Prostate gland (tissue), 2 donors: ENCODE measurements at regions of chr9 and their contacts with region 1.

Region 1: GRCh38 chr9:14428781-14429230 is 114.9 kb upstream of the NFIB start:
- DNase-seq: peak; percentile 73
- H3K4me3 ChIP-seq: no peak overlapping the region
- H3K27ac ChIP-seq: no peak overlapping the region
- H3K4me1 ChIP-seq: no peaks in the 10 kb centered on the region
- H3K27me3 ChIP-seq: no peaks in the 10 kb centered on the region
- CTCF ChIP-seq: peak; percentile 61 to 77 (median 64)
- POLR2A ChIP-seq: no peak

Region 2: DNA sequence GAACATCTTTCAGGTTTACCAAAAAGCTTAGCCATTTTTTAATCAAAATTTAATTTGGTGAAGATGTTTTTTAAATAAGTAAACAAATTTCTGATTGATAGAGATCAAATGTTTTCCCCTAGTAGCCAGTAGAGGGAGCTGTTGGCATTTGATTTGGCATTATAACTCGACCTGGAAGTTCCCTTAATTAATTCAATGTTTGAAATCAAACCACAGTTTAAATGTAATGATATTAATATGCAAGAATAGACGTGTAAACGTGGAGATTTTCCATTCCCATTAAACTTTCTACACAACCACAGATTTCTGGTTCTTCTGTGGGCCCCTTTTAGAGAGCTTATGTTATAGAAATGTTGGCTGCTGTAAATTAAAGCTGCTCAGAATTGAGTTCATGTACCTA is 1001.2 kb before region 1 on chr9:
- intact Hi-C with region 1: loop called (anchors 5 kb)
- DNase-seq: peak; percentile 45
- H3K4me3 ChIP-seq: no peak overlapping the region
- H3K27ac ChIP-seq: no peak overlapping the region
- H3K4me1 ChIP-seq: no peaks in the 10 kb centered on the region
- H3K27me3 ChIP-seq: no peaks in the 10 kb centered on the region
- CTCF ChIP-seq: peak; percentile 50 to 88 (median 80)
- POLR2A ChIP-seq: no peak

Region 3: DNA sequence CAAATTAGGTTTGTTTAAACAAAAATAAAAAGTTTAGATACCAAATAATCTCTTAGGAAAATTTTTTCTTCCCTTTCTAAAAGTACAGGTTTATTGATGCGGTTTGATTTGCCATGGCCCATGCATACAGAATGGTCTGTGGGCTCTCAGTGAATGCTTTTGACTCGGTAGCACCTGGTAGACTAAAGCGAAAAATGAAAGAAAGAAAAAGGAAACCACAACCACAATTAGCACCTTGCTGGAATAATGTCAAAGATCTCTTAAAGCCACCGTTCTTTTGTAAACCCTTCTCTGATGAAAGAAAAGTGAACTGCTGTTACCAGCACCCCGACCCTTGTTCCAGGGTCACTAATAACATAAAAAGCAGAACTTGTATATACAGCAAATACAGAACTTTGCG is 272.8 kb before region 1 on chr9:
- intact Hi-C with region 1: no loop called
- DNase-seq: no peak
- H3K4me3 ChIP-seq: no peak overlapping the region
- H3K27ac ChIP-seq: no peak overlapping the region
- H3K4me1 ChIP-seq: no peaks in the 10 kb centered on the region
- H3K27me3 ChIP-seq: no peaks in the 10 kb centered on the region
- CTCF ChIP-seq: no peak
- POLR2A ChIP-seq: no peak

Region 4: DNA sequence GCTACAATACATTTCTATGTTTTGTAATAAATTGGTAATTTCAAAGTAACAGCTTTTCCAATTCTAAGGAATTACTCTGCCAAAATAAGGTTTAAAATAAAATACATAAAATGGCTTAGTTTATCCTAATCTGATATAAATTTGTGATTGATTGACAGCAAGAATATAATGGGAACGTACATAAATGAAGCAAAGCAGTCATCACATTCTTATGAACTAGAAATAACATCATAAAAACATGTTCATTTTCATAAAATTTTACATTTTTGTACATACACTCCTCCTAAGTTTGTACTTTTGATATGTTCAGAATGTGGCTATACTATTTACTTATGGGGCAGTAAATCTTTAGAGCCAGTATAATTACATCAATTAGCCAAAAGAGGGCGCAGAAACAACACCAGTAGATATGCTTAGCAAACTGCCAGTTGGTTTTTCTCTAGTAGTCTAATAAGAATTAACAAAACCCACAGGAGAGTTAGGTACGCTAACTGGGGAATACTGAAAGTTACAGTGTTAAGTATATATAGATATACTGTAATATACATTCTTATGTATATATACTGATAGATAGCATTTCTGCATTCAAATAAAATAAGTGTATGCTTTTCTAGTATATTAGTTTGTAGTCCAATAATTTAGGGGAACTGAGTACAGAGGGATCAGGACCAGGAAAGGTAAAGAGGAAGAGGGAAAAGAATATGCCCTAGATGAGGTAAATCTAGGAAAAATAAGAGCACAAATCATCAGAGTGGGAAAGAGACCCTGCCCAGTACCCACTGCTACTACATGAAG is 187.6 kb after region 1 on chr9:
- intact Hi-C with region 1: no loop called
- DNase-seq: no peak
- H3K4me3 ChIP-seq: no peak overlapping the region
- H3K27ac ChIP-seq: no peak overlapping the region
- H3K4me1 ChIP-seq: no peaks in the 10 kb centered on the region
- H3K27me3 ChIP-seq: no peaks in the 10 kb centered on the region
- CTCF ChIP-seq: peak in 3 of 4 experiments; percentile 58 to 72 (median 59)
- POLR2A ChIP-seq: no peak